Endothelial cell of umbilical vein (primary cell): ENCODE measurements at regions of chr7 and their contacts with region 1.

Region 1: DNA sequence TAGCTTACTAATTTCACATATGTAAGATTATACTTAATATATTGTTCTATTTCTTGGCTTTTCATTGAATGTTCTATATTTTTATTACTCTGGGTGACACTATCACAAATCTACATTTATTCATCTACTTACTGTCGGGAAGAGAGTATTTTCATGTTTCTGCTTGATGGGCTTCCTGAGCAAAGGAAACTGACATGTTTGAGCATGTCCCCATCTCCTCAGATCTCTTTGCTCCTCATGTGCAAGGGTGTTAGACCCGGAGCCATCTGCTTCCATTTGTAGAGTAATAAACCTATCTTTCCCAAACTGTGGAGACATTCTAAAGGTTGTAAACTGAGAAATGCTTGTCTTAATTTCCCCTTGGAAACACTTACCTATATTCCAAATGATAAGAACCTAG is 103.5 kb downstream of the LSMEM1 start:
- DNase-seq: no peak
- H3K4me3 ChIP-seq: no peak overlapping the region
- H3K27ac ChIP-seq: no peak overlapping the region
- H3K4me1 ChIP-seq: no peaks in the 10 kb centered on the region
- H3K27me3 ChIP-seq: peaks cover 2 to 16% of the 10 kb centered on the region in 2 experiments
- CTCF ChIP-seq: no peak
- POLR2A ChIP-seq: no peak

Region 2: GRCh38 chr7:112437043-112437442 is 147.2 kb before region 1 on chr7:
- CTCF ChIA-PET with region 1: no interaction called
- POLR2A ChIA-PET with region 1: no interaction called
- dilution Hi-C with region 1: no loop called
- intact Hi-C with region 1: no loop called
- DNase-seq: no peak
- H3K4me3 ChIP-seq: no peak overlapping the region
- H3K27ac ChIP-seq: no peak overlapping the region
- H3K4me1 ChIP-seq: no peaks in the 10 kb centered on the region
- H3K27me3 ChIP-seq: peaks cover 3 to 6% of the 10 kb centered on the region in 2 experiments
- CTCF ChIP-seq: no peak
- POLR2A ChIP-seq: no peak

Region 3: DNA sequence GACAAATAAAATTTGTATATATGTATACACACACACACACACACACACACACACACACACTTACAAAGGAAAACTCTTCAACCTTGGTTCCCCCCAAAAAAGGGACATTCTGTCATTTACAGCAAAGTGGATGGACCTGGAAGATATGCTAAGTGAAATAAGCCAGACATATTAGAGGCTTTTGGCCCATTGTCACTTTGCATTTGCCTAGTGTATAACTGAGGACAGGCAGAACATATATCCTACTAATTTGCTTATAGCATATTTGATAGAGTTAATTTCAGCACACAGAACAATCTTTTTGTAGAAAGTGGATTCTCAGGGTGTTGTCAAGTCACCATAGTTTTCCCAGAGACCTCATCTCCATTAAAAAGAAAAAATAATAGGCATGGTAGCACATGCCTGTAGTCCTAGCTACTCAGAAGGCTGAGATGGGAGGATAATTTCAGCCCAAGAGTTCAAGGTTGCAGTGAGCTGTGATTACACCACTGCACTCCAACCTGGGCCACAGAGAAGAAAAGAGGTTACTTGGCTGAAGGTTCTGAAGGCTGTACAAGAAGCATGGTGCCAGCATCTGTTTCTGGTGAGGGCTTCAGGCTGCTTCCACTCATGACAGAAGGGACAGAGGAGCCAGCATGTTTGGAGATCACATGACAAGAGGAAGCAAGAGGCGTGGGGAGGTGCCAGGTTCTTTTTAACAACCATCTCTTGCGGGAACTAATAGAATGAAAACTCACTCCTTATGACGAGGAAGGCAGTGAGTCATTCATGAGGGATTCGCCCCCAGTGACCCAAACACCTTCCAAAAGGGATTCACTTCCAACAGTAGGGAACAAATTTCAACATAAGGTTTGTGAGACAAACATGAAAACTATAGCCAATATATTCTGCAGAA is 70.3 kb after region 1 on chr7:
- CTCF ChIA-PET with region 1: no interaction called
- POLR2A ChIA-PET with region 1: no interaction called
- dilution Hi-C with region 1: no loop called
- intact Hi-C with region 1: loop called (anchors 2 kb)
- DNase-seq: no peak
- H3K4me3 ChIP-seq: no peak overlapping the region
- H3K27ac ChIP-seq: no peak overlapping the region
- H3K4me1 ChIP-seq: no peaks in the 10 kb centered on the region
- H3K27me3 ChIP-seq: no peaks in the 10 kb centered on the region
- CTCF ChIP-seq: no peak
- POLR2A ChIP-seq: no peak

Region 4: DNA sequence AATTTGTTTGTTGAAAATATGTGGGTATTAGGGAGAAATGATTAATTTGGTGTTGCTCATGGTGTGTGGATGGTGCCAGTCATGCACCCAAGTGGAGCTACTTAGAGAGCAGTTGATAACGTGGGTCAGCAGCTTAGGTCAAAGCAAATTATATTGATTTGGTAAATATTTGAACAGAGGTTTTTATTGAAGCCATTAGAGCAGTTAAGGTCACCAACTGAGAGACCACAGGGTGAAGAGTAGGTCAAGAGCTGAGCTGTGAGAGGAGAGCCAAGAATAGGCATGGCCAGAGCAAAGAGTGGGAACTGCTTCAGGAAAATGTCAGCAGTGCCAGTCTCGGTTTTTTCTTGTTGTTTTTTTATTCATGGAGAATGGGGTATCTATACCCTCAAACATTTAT is 108.0 kb after region 1 on chr7:
- CTCF ChIA-PET with region 1: no interaction called
- POLR2A ChIA-PET with region 1: no interaction called
- dilution Hi-C with region 1: no loop called
- intact Hi-C with region 1: no loop called
- DNase-seq: no peak
- H3K4me3 ChIP-seq: no peak overlapping the region
- H3K27ac ChIP-seq: no peak overlapping the region
- H3K4me1 ChIP-seq: no peaks in the 10 kb centered on the region
- H3K27me3 ChIP-seq: peaks cover 0 to 2% of the 10 kb centered on the region in 2 experiments
- CTCF ChIP-seq: no peak
- POLR2A ChIP-seq: no peak